IMR-90 (cell line): ENCODE measurements at regions of chr15 and their contacts with region 1.

Region 1: GRCh38 chr15:90249203-90249863 is at the start of gene TTLL13:
- DNase-seq: peak; percentile 72
- ATAC-seq: peak; percentile 98
- H3K4me3 ChIP-seq: peak within 1 kb of the TSS; percentile 72
- H3K27ac ChIP-seq: no peak within 1 kb of the TSS
- H3K4me1 ChIP-seq: no peaks in the 10 kb centered on the region
- H3K27me3 ChIP-seq: no peaks in the 10 kb centered on the region
- CTCF ChIP-seq: no peak
- POLR2A ChIP-seq: no peak
- RAD21 ChIP-seq: no peak
- total RNA-seq, gene TTLL13: not detected in 2 replicates

Region 2: DNA sequence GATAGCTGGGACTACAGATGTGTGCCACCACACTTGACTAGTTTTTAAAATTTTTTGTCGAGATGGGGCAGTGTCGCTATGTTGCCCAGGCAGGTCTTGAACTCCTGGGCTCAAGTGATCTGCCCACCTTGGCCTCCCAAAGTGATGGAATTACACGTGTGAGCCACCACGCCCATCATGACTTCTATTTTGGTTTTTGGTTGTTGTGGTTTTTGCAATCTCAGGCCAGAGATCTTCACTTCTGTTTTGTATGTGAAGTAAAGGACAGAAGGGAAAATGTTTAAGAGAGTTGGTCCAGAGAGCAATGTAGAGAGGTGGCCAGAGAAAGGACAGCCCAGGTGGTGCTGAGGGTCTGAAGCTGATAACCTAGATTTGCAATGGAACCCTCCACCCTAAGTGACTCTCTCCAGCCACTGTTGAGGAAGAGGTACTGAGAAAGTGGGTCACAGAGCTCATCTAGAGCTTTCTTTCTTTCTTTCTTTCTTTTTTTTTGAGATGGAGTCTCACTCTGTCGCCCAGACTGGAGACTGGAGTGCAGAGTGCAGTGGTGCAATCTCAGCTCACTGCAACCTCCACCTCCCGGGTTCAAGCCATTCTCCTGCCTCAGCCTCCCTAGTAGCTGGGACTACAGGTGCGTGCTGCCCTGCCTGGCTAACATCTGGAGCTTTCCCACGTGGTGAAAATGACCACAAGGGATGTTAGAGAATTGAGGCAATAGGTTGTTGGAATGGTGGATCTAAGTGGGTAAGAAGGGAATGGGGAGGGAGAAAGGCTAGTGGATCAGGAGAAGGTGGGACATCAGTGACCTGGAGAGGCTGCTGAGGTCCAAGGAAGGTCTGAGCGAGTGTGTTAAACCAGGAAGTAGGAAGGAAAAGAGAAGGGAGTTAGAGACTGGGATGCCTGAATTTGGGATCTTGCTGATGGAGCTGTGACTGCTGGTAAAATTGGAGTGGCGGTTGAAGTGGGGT is 70.6 kb before region 1 on chr15:
- CTCF ChIA-PET with region 1: no interaction called
- POLR2A ChIA-PET with region 1: interaction called, 10 read pairs
- dilution Hi-C with region 1: no loop called
- in situ Hi-C with region 1: no loop called
- intact Hi-C with region 1: no loop called
- DNase-seq: no peak
- ATAC-seq: no peak
- H3K4me3 ChIP-seq: no peak overlapping the region
- H3K27ac ChIP-seq: no peak overlapping the region
- H3K4me1 ChIP-seq: peaks cover 3% of the 10 kb centered on the region
- H3K27me3 ChIP-seq: peaks cover 8% of the 10 kb centered on the region
- CTCF ChIP-seq: no peak
- POLR2A ChIP-seq: no peak
- RAD21 ChIP-seq: no peak